Adrenal gland (tissue), 19 donors: ENCODE measurements at regions of chr14 and their contacts with region 1.

Region 1: GRCh38 chr14:25431211-25432048 is 381.5 kb upstream of the STXBP6 start:
- DNase-seq: peak; percentile 26 to 77 (median 50)
- H3K4me3 ChIP-seq: no peak overlapping the region
- H3K27ac ChIP-seq: no peak overlapping the region
- H3K4me1 ChIP-seq: no peaks in the 10 kb centered on the region
- H3K27me3 ChIP-seq: no peaks in the 10 kb centered on the region
- CTCF ChIP-seq: peak in 5 of 6 experiments; percentile 17 to 51 (median 42)
- POLR2A ChIP-seq: no peak

Region 2: GRCh38 chr14:25537846-25538455 is 106.5 kb after region 1 on chr14:
- intact Hi-C with region 1: loop called in 1 of 2 experiments (anchors 2 kb)
- DNase-seq: peak; percentile 31 to 77 (median 61)
- H3K4me3 ChIP-seq: no peak overlapping the region
- H3K27ac ChIP-seq: no peak overlapping the region
- H3K4me1 ChIP-seq: no peaks in the 10 kb centered on the region
- H3K27me3 ChIP-seq: no peaks in the 10 kb centered on the region
- CTCF ChIP-seq: peak; percentile 38 to 68 (median 56)
- POLR2A ChIP-seq: no peak